Activated B cell treated with CpG ODN at 0.5 μM for 24 hours (primary cell): ENCODE measurements at regions of chr9 and their contacts with region 1.

Region 1: GRCh38 chr9:6632516-6633183 is 12.9 kb downstream of the GLDC start:
- DNase-seq: peak; percentile 29
- ATAC-seq: peak; percentile 88
- H3K4me3 Mint-ChIP-seq: peak overlapping the region; percentile 6
- H3K27ac Mint-ChIP-seq: no peak overlapping the region
- H3K4me1 Mint-ChIP-seq: peaks cover 33% of the 10 kb centered on the region
- H3K27me3 Mint-ChIP-seq: peaks cover 3% of the 10 kb centered on the region
- CTCF ChIP-seq: no peak

Region 2: GRCh38 chr9:6605202-6605601 is 27.4 kb before region 1 on chr9:
- CTCF ChIA-PET with region 1: no interaction called
- POLR2A ChIA-PET with region 1: no interaction called
- intact Hi-C with region 1: loop called (anchors 2 kb)
- DNase-seq: peak; percentile 23
- ATAC-seq: peak; percentile 100
- H3K4me3 Mint-ChIP-seq: peak overlapping the region; percentile 64
- H3K27ac Mint-ChIP-seq: peak overlapping the region; percentile 14
- H3K4me1 Mint-ChIP-seq: peaks cover 15% of the 10 kb centered on the region
- H3K27me3 Mint-ChIP-seq: no peaks in the 10 kb centered on the region
- CTCF ChIP-seq: no peak

Region 3: DNA sequence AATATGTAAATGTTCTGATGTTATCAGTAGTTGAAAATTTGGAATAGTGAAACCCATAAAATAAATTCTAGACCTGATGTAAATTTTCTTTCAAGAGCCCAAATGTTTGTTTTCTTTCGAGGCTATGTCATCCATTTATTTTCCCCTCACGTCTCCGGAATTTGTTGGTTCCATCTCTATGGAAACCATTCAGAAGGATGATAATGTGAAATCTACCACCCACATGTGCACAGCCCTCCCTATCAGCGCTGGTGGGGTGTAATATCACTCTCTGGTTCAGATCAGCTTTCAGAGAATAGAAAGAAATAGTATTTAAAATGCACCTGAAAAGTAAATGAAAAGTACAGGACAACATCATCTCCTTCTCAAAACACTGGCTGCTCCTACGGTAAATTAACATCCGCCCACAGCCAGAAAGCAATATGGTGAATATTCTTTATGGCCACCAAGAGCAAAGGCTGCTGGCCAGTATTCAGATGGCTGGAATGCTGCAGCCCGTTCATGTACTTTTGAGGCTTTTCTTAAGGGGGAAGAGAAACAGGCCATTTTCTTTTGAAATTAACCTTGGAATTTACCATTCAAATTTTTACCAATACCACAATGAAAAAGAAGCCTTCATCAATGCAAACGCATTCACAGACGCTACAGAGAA is 15.6 kb before region 1 on chr9:
- CTCF ChIA-PET with region 1: no interaction called
- POLR2A ChIA-PET with region 1: no interaction called
- intact Hi-C with region 1: no loop called
- DNase-seq: no peak
- ATAC-seq: no peak
- H3K4me3 Mint-ChIP-seq: no peak overlapping the region
- H3K27ac Mint-ChIP-seq: no peak overlapping the region
- H3K4me1 Mint-ChIP-seq: peaks cover 15% of the 10 kb centered on the region
- H3K27me3 Mint-ChIP-seq: peaks cover 2% of the 10 kb centered on the region
- CTCF ChIP-seq: no peak